ENCODE measurements at regions of chr11 and their contacts with region 1.

Region 1: DNA sequence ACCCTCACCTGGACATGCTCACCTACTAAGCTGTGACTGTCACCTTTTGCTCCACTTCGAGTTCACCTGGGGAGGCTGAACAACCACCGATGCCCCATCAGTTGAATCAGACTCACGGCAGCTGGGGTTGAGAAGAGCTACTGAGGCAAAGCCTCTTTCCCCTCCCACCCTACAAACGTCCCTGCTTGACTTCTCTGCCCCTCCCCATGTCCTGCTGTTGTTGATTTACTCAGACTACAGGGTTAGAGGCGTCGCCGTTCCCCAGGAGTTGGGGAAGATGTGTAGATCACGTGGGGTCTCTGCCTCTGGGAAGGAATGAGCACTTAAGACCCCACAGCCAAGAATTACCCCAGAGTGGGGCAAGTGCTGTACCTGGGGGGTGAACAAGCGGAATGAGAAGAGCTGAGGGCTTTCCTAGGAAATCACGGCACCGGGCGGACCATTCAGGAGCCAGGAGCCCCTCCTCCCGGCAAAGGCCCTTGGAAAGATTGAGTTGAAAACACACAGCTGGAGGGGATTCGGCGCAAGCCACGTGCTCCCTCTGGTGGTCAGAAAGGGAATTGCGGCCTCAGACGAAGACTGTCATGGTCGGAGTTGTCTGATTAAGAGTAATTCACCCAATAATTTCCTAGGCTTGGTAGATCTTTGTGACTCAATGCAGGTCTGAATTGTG is 7.0 kb downstream of the FXYD2 start:
- DNase-seq: peak; percentile 49
- ATAC-seq: peak; percentile 45
- H3K4me3 ChIP-seq: peak overlapping the region in 1 of 3 experiments; percentile 61; a peak in 1 of 6 replicates
- H3K27ac ChIP-seq: no peak overlapping the region
- H3K4me1 ChIP-seq: peaks cover 73% of the 10 kb centered on the region
- H3K27me3 ChIP-seq: peaks cover 0 to 5% of the 10 kb centered on the region in 2 experiments; a peak in 1 of 5 replicates
- CTCF ChIP-seq: peak; percentile 92
- EP300 ChIP-seq: no peak
- POLR2A ChIP-seq: no peak
- RAD21 ChIP-seq: peak; percentile 71

Region 2: DNA sequence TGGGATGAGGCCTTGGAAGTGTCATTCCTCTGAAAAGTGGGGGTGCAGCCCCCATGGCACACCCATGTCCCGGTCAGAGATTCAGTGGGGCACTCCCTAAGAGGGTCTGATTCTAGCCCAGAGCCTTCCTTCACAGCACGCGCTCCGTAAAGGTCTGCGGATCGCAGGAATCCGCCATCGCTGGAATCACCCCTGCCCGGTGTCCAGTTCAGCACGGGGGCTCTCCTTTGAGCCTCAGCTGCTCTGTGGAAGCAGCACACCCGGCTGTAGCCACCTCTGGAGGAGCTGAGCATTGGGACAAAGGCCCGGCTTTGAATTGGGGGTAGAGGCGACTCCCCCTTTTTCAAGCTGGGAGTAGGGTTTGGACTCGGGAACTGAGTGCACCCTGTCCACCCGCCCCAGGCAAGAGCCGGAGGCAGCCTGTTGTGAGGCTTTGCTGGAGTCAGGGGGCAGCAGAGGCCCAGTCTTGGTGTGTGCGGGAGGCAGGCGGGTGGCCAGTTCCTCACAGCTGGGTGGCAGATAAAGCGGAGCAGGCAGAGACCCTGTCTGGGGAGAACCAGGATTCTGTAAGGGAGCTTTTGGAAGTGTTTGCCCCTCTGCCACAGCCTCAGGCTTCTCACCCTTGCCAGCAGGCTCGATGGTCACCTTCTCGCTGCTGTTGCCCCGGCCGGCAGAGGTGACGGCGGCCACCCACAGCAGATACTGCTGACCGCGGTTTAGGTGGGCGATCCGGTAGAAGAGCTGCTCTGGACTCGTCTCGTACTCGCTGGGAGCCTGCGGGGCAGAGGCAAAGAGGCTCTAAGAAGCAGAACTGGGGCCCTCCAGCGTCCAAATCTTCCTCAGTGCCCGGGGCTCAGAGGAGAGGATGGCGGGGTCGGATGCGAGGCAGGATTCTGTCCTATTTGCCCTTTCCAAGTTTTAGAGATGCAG is 374.0 kb before region 1 on chr11:
- CTCF ChIA-PET with region 1: interaction called, 9 read pairs
- POLR2A ChIA-PET with region 1: no interaction called
- in situ Hi-C with region 1: no loop called
- intact Hi-C with region 1: loop called (anchors 1 kb)
- DNase-seq: peak; percentile 40
- ATAC-seq: peak; percentile 96
- H3K4me3 ChIP-seq: no peak overlapping the region
- H3K27ac ChIP-seq: no peak overlapping the region
- H3K4me1 ChIP-seq: no peaks in the 10 kb centered on the region
- H3K27me3 ChIP-seq: peaks cover 2 to 32% of the 10 kb centered on the region in 2 experiments; a peak in 3 of 5 replicates
- CTCF ChIP-seq: peak; percentile 89
- EP300 ChIP-seq: no peak
- POLR2A ChIP-seq: no peak
- RAD21 ChIP-seq: peak; percentile 77

Measured in HepG2 (cell line).